ENCODE measurements at regions of chr16 and their contacts with region 1.

Region 1: DNA sequence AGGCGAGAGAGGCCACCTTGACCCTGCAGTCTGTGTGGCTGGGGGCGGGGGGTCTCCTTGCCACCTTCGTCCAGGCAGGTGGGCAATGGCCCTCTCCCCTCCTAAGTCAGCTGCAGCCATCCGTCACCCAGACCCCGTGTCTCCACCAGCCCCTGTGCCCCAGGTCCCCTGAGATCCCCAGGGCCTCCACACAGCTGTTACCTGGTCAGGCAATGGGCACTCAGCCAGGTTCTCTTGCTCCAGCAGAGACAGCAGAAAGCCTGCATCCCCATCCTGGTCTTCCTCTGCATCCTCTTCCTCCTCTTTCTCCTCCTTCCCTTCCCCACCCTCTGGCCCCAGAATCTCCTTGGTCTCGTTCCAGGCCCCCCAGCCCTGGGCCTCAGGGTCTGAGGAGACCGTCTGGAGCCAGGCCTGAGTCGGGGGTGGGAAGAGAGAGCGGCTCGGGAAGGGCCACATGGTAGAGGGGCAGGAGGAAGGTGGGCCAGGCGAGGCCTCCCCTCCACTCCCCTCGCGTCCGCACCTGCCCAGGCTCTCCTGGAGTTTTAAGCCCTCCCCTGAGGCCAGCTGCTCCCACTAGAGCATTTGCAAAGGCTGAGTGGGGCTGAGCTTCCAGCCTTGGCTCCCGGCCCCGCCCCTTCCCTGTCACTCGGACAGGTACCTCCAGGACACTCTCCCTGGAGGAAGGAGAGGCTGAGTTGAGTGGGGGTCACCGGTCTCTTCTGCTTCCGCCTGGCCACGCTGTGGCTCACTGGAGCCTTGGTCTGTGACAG is at the start of gene PABPN1L:
- DNase-seq: no peak
- ATAC-seq: no peak
- H3K4me3 ChIP-seq: no peak within 1 kb of the TSS
- H3K27ac ChIP-seq: no peak within 1 kb of the TSS
- H3K4me1 ChIP-seq: no peaks in the 10 kb centered on the region
- H3K27me3 ChIP-seq: no peaks in the 10 kb centered on the region
- CTCF ChIP-seq: no peak
- POLR2A ChIP-seq: no peak
- total RNA-seq, gene PABPN1L: 0.37 TPM in 1 of 6 experiments, not detected in the others

Region 2: GRCh38 chr16:88754912-88755744 is 111.2 kb before region 1 on chr16:
- intact Hi-C with region 1: no loop called
- DNase-seq: no peak
- ATAC-seq: no peak
- H3K4me3 ChIP-seq: no peak overlapping the region
- H3K27ac ChIP-seq: no peak overlapping the region
- H3K4me1 ChIP-seq: peaks cover 0 to 19% (median 8%) of the 10 kb centered on the region in 4 donors
- H3K27me3 ChIP-seq: no peaks in the 10 kb centered on the region
- CTCF ChIP-seq: no peak
- POLR2A ChIP-seq: no peak

Region 3: GRCh38 chr16:88811769-88812512 is 54.4 kb before region 1 on chr16 and contains the start of gene APRT:
- intact Hi-C with region 1: loop called in 1 of 2 experiments (anchors 10 kb)
- DNase-seq: peak; percentile 96 to 98 (median 97)
- ATAC-seq: peak; percentile 87 to 94 (median 90)
- H3K4me3 ChIP-seq: peak within 1 kb of the TSS; percentile 74 to 99 (median 85)
- H3K27ac ChIP-seq: peak within 1 kb of the TSS; percentile 45 to 90 (median 75)
- H3K4me1 ChIP-seq: peaks cover 0 to 18% (median 4%) of the 10 kb centered on the region in 4 donors
- H3K27me3 ChIP-seq: no peaks in the 10 kb centered on the region
- CTCF ChIP-seq: peak; percentile 32 to 47 (median 36)
- POLR2A ChIP-seq: peak; percentile 72
- total RNA-seq, gene APRT: 61.4 to 120 (median 74.1) TPM

Measured in right lobe of liver (tissue), 6 donors.